B cell (primary cell): ENCODE measurements at regions of chr12 and their contacts with region 1.

Region 1: DNA sequence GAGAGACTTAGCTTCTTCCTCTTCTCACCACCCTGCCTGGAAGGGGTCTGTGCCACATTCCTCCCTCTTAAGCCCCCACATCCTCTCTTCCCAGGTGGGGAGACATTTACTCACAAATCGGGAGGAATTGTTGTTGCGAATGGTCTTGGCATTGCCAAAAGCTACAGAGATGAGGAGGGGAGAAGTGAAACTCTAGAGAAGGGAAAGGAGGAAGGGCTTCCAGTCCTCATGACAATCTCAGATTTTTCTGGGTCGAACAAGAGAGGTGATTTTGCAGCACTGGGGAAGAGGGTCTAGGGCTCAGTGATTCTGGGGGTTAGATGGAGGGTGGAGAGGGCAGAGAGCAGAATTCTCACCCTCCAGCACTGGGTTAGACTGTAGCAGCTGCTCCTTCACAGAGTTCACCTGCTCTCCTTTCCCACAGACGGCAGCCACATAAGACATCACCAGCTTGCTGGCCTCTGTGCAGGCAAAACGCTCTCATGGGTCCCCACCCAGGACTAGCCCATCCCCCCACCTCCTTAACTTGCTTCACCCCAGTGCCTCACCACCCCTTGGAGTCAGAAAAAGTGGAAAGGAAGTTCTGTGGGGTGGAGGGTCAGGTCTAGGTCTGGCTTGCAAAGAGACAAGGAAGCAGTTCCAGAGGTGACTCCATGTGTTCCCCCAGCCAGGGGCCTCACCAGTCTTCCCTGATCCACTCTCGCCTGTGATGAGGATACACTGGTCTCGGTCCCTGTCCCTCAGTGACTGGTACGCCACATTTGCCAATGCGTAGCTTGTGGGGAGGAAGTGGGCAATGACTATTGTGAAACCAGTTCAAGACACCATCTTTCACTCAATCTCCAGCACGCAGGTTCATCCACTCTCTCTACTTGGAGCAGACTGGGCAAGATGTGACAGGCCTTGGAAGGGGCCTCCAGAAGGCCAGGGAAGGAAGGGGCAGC is 2.7 kb downstream of the MYO1A start:
- DNase-seq: peak; percentile 50
- ATAC-seq: peak; percentile 49
- H3K4me3 ChIP-seq: peak overlapping the region in 2 of 5 experiments; percentile 11 to 38
- H3K4me3 Mint-ChIP-seq: peak overlapping the region; percentile 74
- H3K27ac ChIP-seq: no peak overlapping the region
- H3K27ac Mint-ChIP-seq: peak overlapping the region; percentile 82
- H3K4me1 ChIP-seq: peaks cover 18 to 24% of the 10 kb centered on the region in 2 donors
- H3K4me1 Mint-ChIP-seq: peaks cover 26% of the 10 kb centered on the region
- H3K27me3 ChIP-seq: no peaks in the 10 kb centered on the region
- H3K27me3 Mint-ChIP-seq: no peaks in the 10 kb centered on the region
- CTCF ChIP-seq: no peak

Region 2: DNA sequence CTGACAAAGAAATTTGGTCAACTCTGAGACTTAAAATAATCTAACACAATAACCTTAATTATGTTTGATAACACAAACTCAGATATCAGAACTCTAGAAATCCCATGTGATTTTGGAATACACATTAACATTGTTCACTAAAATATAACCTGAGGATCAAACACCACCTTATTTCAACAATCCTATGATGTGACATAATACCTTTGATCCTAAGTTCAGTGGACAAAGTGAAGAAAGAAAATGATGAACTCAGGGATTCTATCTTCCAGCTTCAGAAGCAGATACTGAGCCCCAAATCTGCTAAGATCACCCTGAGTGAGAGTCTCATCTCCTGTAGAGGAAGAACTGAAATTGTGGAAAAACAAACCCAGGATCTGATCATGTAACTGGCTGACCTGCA is 648.9 kb before region 1 on chr12:
- CTCF ChIA-PET with region 1: no interaction called
- POLR2A ChIA-PET with region 1: no interaction called
- intact Hi-C with region 1: no loop called
- DNase-seq: no peak
- ATAC-seq: no peak
- H3K4me3 ChIP-seq: no peak overlapping the region
- H3K4me3 Mint-ChIP-seq: no peak overlapping the region
- H3K27ac ChIP-seq: no peak overlapping the region
- H3K27ac Mint-ChIP-seq: no peak overlapping the region
- H3K4me1 ChIP-seq: no peaks in the 10 kb centered on the region
- H3K4me1 Mint-ChIP-seq: peaks cover 4% of the 10 kb centered on the region
- H3K27me3 ChIP-seq: no peaks in the 10 kb centered on the region
- H3K27me3 Mint-ChIP-seq: no peaks in the 10 kb centered on the region
- CTCF ChIP-seq: no peak

Region 3: GRCh38 chr12:57005980-57006808 is 41.0 kb before region 1 on chr12 and contains the start of gene ZBTB39:
- CTCF ChIA-PET with region 1: no interaction called
- POLR2A ChIA-PET with region 1: no interaction called
- intact Hi-C with region 1: no loop called
- DNase-seq: peak; percentile 84
- ATAC-seq: peak; percentile 92
- H3K4me3 ChIP-seq: peak within 1 kb of the TSS; percentile 39 to 87 (median 70)
- H3K4me3 Mint-ChIP-seq: peak within 1 kb of the TSS; percentile 91
- H3K27ac ChIP-seq: peak within 1 kb of the TSS; percentile 43 to 86
- H3K27ac Mint-ChIP-seq: peak within 1 kb of the TSS; percentile 93
- H3K4me1 ChIP-seq: peaks cover 16 to 21% of the 10 kb centered on the region in 2 donors
- H3K4me1 Mint-ChIP-seq: peaks cover 41% of the 10 kb centered on the region
- H3K27me3 ChIP-seq: no peaks in the 10 kb centered on the region
- H3K27me3 Mint-ChIP-seq: no peaks in the 10 kb centered on the region
- CTCF ChIP-seq: peak; percentile 61
- total RNA-seq, gene ZBTB39: 13.9 and 15.6 TPM in 2 replicates

Region 4: DNA sequence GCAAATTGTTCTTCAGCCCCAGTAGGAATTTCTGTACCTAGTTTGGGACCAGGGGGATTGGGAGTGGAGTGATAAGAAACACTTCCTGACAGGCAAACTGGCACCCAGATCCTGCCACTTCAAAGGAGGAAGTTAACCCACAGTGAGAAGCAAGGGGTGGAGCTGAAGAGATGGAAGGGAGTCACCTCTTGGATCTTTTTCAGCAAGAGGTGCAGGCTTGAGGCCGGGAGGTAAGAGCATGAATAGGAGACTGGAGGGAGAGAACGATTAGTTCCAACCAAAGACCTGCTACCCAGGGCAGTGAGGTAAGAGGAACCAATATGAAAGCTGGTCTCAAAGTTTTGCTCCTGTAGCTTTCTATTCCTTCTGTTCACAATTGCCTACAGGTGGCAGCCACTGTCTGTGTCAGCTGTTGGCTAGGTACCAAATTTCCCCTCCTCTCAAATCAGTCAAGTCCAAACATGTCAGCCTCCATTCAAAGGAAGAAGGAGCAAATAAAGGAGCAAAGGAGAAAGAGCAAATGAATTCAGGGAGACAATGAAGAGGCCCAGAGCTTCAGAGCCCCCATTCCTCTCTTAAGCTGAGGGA is 16.0 kb before region 1 on chr12:
- CTCF ChIA-PET with region 1: interaction called, 12 read pairs
- POLR2A ChIA-PET with region 1: interaction called, 11 read pairs
- intact Hi-C with region 1: no loop called
- DNase-seq: peak; percentile 63
- ATAC-seq: peak; percentile 68
- H3K4me3 ChIP-seq: no peak overlapping the region
- H3K4me3 Mint-ChIP-seq: no peak overlapping the region
- H3K27ac ChIP-seq: no peak overlapping the region
- H3K27ac Mint-ChIP-seq: peak overlapping the region; percentile 8
- H3K4me1 ChIP-seq: peaks cover 8 to 14% of the 10 kb centered on the region in 2 donors
- H3K4me1 Mint-ChIP-seq: peaks cover 19% of the 10 kb centered on the region
- H3K27me3 ChIP-seq: no peaks in the 10 kb centered on the region
- H3K27me3 Mint-ChIP-seq: no peaks in the 10 kb centered on the region
- CTCF ChIP-seq: peak; percentile 6